ENCODE measurements at regions of chr9 and their contacts with region 1.

Region 1: GRCh38 chr9:69672596-69673310 is 582 bp upstream of the APBA1 start:
- DNase-seq: peak; percentile 87

Region 2: GRCh38 chr9:69421908-69422801 is 250.6 kb before region 1 on chr9:
- intact Hi-C with region 1: loop called (anchors 10 kb)
- DNase-seq: no peak

Region 3: GRCh38 chr9:69759421-69760277 is 86.9 kb after region 1 on chr9 and contains the start of gene PTAR1:
- intact Hi-C with region 1: loop called (anchors 2 kb)
- DNase-seq: peak; percentile 96
- total RNA-seq, gene PTAR1: 27.3 TPM

Region 4: DNA sequence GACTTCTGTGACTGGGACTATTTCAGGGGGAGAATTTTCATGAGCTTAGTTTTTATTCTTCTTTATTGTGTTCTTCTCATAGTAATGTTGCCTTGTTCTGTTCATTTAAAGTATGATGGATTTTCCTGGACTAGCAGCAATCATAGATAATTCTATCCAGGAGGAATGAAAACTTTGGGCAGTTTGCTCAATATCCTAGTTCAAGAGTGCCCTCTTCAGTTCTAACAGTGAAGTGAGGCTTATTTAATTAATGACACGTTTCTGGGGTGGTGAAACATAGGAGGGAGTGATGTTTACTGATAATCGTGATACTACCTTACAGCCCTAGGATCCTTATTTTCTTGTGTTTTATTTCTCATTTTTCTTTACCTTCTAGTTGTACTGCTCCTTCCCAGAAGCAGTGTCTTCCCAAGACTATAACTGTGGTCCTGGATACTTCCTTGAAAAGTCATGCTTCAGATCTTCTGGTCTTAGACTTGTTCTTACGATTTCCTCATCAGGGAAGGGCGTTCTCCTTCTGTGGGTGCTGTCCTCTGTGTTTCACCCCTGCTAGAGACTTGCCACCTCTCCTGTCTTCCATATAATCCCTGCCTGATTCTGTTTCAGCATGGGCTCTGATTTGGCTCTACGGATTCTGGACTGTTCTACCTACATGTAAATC is 205.2 kb after region 1 on chr9:
- intact Hi-C with region 1: loop called (anchors 5 kb)
- DNase-seq: no peak

Region 5: GRCh38 chr9:69919461-69920061 is 246.8 kb after region 1 on chr9:
- intact Hi-C with region 1: loop called (anchors 5 kb)
- DNase-seq: no peak

Measured in cardiac septum (tissue), 1 donor.